Sciatic nerve (tissue), 2 donors: ENCODE measurements at regions of chr20 and their contacts with region 1.

Region 1: DNA sequence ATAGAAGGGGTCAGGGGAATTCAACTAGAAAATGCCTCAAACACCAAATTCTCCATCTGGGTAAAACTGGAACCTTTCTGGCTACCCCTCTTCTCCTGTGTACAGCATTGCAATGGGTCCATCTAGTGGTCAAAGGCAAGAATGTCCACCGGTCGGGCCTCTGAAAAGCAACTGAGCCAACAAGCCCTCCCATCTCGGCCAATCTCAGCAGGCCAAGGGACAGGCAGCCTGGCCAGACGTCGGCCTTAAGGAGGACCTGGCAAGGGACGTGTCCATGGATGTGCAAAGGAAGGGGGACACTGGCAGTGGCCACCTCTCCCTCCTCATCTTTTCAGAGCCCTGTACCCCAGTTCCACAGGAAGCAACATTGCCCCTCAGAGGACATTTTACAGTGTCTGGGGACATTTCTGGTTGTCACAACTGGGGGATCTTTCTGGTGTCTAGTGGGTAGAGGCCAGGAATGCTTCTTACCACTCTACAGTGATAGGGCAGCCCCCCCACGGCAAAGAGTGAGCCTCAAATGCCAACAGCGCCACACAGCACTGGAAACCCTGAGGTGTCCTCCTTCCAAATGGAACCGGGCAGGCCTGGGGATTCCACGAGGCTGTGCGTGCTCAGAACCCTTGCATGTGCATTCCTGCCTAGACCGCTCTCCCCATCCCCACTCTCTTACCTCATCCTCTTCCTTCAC is 99.8 kb upstream of the FOXA2 start:
- DNase-seq: peak; percentile 76
- ATAC-seq: peak; percentile 87

Region 2: GRCh38 chr20:22341508-22341907 is 342.7 kb before region 1 on chr20:
- intact Hi-C with region 1: loop called (anchors 5 kb)
- DNase-seq: no peak
- ATAC-seq: no peak

Region 3: GRCh38 chr20:22716821-22717351 is 32.7 kb after region 1 on chr20:
- intact Hi-C with region 1: no loop called
- DNase-seq: no peak
- ATAC-seq: peak; percentile 64

Region 4: GRCh38 chr20:23727016-23727415 is 1042.8 kb after region 1 on chr20:
- intact Hi-C with region 1: no loop called
- DNase-seq: no peak
- ATAC-seq: no peak